Psoas muscle (tissue), 8 donors: ENCODE measurements at regions of chr2 and their contacts with region 1.

Region 1: DNA sequence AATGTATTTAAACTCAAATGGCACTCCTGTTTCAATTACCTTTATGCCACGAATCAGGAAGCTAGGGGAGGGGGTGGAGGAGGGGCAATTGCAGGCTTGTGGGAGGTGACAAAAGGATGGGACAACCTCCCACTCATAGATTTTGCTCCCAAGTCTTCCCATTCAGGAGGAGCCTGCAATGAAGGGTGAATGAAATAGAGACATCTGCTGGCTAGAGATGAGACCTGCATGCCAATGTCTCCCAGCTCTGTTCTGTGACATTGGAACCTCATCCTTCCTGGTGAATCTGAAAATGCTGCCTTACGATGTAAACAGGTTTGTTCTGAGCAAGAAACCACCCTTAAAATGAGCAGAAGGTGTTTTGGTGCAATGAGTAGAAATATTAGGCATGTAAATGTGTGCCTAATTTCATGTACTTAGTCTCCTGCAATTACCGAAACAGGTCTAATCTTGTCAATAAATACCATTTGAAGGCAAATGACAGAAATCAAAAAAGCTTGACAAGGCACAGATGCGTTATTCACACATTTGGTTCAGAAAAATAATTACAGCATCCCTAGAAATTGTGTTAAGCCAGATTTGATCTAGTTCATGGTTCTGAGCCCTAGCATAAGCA is 2.7 kb upstream of the PID1 start:
- DNase-seq: no peak
- ATAC-seq: peak in 3 of 4 donors; percentile 73 to 80 (median 75)
- H3K4me3 ChIP-seq: peak overlapping the region; percentile 20
- H3K27ac ChIP-seq: no peak overlapping the region
- H3K4me1 ChIP-seq: no peaks in the 10 kb centered on the region
- H3K27me3 ChIP-seq: peaks cover 0 to 5% (median 0%) of the 10 kb centered on the region in 3 donors
- CTCF ChIP-seq: peak; percentile 56

Region 2: DNA sequence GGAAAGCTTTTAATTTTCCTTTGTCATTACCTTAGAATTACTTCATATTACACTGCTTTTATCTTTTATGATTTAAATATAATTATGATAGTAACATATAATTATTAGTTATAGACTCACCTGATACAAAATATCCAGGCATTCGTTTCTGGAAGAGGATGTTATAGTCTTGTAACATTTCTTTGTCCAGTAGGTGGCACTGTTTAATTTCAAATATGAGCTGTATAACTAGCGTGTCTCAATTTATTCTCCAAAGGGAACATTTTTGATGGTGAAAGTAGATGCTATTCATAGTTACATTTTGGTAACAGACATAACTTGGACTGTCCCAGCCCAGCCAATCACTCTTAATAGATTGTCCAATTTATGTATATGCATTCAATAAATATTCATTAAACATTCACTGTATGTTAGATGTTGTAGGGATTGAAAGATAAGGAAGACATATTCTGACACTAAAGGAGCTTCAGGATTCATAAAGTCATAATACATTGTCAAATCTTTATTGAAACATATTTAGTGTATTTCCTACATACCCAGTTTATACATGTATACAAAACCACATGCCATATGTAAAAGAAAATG is 1383.2 kb before region 1 on chr2:
- intact Hi-C with region 1: loop called in 1 of 2 experiments (anchors 5 kb)
- DNase-seq: no peak
- ATAC-seq: peak in 2 of 4 donors; percentile 36 to 55
- H3K4me3 ChIP-seq: no peak overlapping the region
- H3K27ac ChIP-seq: no peak overlapping the region
- H3K4me1 ChIP-seq: no peaks in the 10 kb centered on the region
- H3K27me3 ChIP-seq: no peaks in the 10 kb centered on the region
- CTCF ChIP-seq: peak; percentile 56

Region 3: DNA sequence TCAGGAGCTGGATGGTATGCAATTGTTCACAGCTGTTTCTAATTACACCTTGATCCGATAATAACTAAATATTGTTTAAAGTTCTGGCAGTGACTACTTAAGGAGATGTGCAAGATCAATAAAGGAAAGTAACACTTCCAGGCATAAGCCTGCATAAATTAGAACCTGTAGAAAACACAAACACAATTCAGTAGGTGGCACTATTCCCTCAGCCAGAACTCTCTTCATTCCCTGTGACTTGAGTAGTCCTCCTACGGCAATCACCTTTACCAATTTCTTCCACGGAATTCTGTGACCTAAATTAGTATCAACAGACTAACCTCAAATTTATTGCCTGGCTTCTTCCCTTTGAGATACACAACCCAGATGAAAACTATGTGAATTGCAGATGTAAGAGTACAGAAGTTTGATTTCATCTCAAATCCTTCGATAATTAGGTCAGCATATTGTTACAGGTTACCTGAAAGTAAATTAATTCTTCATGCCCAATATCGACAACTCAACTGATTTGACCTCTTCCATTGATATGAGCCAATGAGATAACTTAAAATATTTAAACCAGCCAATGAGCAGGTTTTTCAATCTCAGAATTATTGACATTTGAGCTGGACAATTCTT is 140.6 kb before region 1 on chr2:
- intact Hi-C with region 1: loop called in 1 of 2 experiments (anchors 10 kb)
- DNase-seq: no peak
- ATAC-seq: no peak
- H3K4me3 ChIP-seq: no peak overlapping the region
- H3K27ac ChIP-seq: no peak overlapping the region
- H3K4me1 ChIP-seq: no peaks in the 10 kb centered on the region
- H3K27me3 ChIP-seq: no peaks in the 10 kb centered on the region
- CTCF ChIP-seq: peak; percentile 14

Region 4: GRCh38 chr2:229235131-229235914 is 38.5 kb before region 1 on chr2:
- intact Hi-C with region 1: no loop called
- DNase-seq: peak in 1 of 2 donors; percentile 40
- ATAC-seq: peak in 1 of 4 donors; percentile 65
- H3K4me3 ChIP-seq: no peak overlapping the region
- H3K27ac ChIP-seq: no peak overlapping the region
- H3K4me1 ChIP-seq: no peaks in the 10 kb centered on the region
- H3K27me3 ChIP-seq: no peaks in the 10 kb centered on the region
- CTCF ChIP-seq: no peak